ENCODE measurements at regions of chr15 and their contacts with region 1.

Region 1: DNA sequence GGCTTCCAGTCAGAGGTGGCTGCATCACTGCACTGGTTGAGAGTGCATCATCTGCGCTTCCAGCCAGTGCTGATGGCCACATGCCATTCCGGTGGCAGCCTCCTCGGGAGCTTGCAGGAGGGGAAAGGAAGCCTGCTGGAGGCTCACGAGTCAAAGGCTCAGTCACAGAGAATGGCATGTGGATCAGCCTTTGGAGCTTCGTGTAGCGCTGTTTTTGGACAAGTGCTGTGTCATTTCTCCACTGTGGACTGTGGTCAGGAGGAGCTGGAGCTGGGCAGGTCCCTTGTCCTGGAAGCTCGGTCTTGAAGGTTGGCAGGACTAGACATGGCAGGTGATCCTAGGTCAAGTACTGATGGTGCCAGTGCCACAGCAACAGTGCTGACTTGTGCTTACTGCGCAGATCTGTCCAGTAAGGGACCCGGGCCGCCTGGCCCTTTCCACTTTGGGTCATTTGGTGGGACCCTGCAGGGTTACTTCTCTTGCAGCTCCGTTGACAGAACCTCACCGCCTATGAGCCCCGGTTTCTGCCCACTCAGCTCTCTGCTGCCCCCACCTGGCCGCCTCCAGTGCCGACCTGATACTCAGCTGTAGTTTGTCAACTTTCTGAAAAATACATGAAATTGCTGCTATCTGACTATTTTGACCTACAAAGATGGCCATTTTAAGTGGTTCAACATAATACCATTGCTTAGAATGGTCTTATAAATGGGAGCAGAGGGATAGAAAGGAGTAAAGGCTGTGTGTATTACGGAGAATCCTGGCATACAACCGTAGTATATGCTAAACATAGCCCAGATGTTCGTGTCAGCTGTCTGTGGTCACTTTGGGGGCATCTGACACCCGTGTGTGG is 27.6 kb upstream of the TRPM1 start:
- DNase-seq: no peak
- ATAC-seq: peak; percentile 98
- H3K4me3 ChIP-seq: no peak overlapping the region
- H3K27ac ChIP-seq: no peak overlapping the region
- H3K4me1 ChIP-seq: no peaks in the 10 kb centered on the region
- H3K27me3 ChIP-seq: no peaks in the 10 kb centered on the region; a peak in 1 of 4 replicates
- CTCF ChIP-seq: peak; percentile 81 to 98 (median 96)
- EP300 ChIP-seq: no peak
- POLR2A ChIP-seq: no peak
- RAD21 ChIP-seq: peak; percentile 96

Region 2: DNA sequence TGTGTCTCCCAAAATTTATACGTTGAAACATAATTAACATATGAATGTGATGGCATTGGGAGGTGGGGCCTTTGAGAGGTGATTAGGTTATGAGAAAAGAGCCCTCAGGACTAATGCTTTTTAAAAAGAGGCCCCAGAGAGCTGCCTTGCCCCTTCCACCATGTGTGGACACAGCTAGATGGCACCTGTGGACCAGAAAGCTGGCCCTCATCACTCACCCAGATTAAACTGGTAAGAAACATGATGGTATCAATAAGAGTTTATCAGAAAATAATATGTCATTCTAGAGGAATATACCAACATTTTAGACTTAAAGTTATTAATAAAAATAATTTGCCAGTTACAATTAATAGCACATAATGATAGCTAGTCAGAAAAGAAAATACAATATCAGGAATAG is 250.6 kb before region 1 on chr15:
- CTCF ChIA-PET with region 1: interaction called, 12 read pairs
- POLR2A ChIA-PET with region 1: no interaction called
- RAD21 ChIA-PET with region 1: no interaction called
- SMC1A ChIA-PET with region 1: interaction called, 4 read pairs
- in situ Hi-C with region 1: no loop called
- intact Hi-C with region 1: no loop called
- DNase-seq: no peak
- ATAC-seq: no peak
- H3K4me3 ChIP-seq: no peak overlapping the region
- H3K27ac ChIP-seq: no peak overlapping the region
- H3K4me1 ChIP-seq: no peaks in the 10 kb centered on the region
- H3K27me3 ChIP-seq: no peaks in the 10 kb centered on the region
- CTCF ChIP-seq: no peak; a peak in 1 of 6 replicates
- EP300 ChIP-seq: no peak
- POLR2A ChIP-seq: no peak
- RAD21 ChIP-seq: no peak

Region 3: GRCh38 chr15:30903497-30904201 is 225.5 kb before region 1 on chr15 and contains the start of gene FAN1:
- CTCF ChIA-PET with region 1: interaction called, 14 read pairs
- POLR2A ChIA-PET with region 1: no interaction called
- RAD21 ChIA-PET with region 1: interaction called, 6 read pairs
- SMC1A ChIA-PET with region 1: interaction called, 3 read pairs
- in situ Hi-C with region 1: no loop called
- intact Hi-C with region 1: no loop called
- DNase-seq: peak; percentile 77
- ATAC-seq: peak; percentile 94
- H3K4me3 ChIP-seq: peak within 1 kb of the TSS; percentile 73
- H3K27ac ChIP-seq: peak within 1 kb of the TSS; percentile 68
- H3K4me1 ChIP-seq: no peaks in the 10 kb centered on the region
- H3K27me3 ChIP-seq: no peaks in the 10 kb centered on the region
- CTCF ChIP-seq: no peak
- EP300 ChIP-seq: no peak
- POLR2A ChIP-seq: peak; percentile 93
- RAD21 ChIP-seq: no peak
- polyA plus RNA-seq, gene FAN1: 0.55 to 1.0 TPM

Region 4: GRCh38 chr15:30985081-30985531 is 144.0 kb before region 1 on chr15:
- CTCF ChIA-PET with region 1: interaction called, 7 read pairs
- POLR2A ChIA-PET with region 1: no interaction called
- RAD21 ChIA-PET with region 1: interaction called, 8 read pairs
- SMC1A ChIA-PET with region 1: interaction called, 8 read pairs
- in situ Hi-C with region 1: no loop called
- intact Hi-C with region 1: loop called (anchors 10 kb)
- DNase-seq: no peak
- ATAC-seq: peak; percentile 59
- H3K4me3 ChIP-seq: peak overlapping the region; percentile 14; the same call in 1 of the 2 replicates
- H3K27ac ChIP-seq: peak overlapping the region; percentile 20; the same call in 1 of the 2 replicates
- H3K4me1 ChIP-seq: peaks cover 16% of the 10 kb centered on the region
- H3K27me3 ChIP-seq: no peaks in the 10 kb centered on the region
- CTCF ChIP-seq: no peak
- EP300 ChIP-seq: no peak
- POLR2A ChIP-seq: no peak
- RAD21 ChIP-seq: no peak

Region 5: DNA sequence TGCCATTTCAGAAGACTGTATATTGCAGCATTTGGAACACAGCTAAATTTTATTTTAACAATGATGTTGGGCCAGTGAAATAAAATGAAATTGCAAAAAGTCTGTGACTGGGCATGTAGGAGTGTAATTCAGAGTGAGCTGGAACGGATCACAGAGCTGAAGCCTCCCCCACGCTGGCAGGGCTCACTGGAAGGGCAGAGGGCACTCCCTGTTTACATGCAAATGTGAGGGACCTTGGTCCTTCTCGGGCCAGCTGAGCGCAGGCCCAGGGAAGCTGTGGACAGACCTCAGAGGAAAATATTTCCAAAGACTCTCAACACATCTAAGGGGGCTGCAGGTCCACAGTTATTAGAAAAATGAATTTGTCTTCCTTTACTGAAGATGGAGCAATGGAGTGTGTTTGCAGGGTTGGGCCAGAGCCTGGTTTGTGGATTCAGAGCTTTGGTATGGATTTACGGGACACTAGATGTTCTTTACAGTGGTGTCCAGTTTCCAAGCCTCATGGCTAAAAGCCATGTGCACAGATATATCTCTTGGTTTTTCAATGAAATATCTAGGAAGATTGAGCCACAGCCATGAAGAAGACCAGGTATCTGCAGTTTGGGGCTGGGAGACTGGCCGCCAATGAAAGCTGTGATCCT is 59.7 kb before region 1 on chr15:
- CTCF ChIA-PET with region 1: no interaction called
- POLR2A ChIA-PET with region 1: no interaction called
- RAD21 ChIA-PET with region 1: no interaction called
- SMC1A ChIA-PET with region 1: no interaction called
- in situ Hi-C with region 1: no loop called
- intact Hi-C with region 1: no loop called
- DNase-seq: no peak
- ATAC-seq: no peak
- H3K4me3 ChIP-seq: no peak overlapping the region
- H3K27ac ChIP-seq: no peak overlapping the region
- H3K4me1 ChIP-seq: no peaks in the 10 kb centered on the region
- H3K27me3 ChIP-seq: no peaks in the 10 kb centered on the region
- CTCF ChIP-seq: no peak
- EP300 ChIP-seq: no peak
- POLR2A ChIP-seq: no peak
- RAD21 ChIP-seq: no peak

Region 6: DNA sequence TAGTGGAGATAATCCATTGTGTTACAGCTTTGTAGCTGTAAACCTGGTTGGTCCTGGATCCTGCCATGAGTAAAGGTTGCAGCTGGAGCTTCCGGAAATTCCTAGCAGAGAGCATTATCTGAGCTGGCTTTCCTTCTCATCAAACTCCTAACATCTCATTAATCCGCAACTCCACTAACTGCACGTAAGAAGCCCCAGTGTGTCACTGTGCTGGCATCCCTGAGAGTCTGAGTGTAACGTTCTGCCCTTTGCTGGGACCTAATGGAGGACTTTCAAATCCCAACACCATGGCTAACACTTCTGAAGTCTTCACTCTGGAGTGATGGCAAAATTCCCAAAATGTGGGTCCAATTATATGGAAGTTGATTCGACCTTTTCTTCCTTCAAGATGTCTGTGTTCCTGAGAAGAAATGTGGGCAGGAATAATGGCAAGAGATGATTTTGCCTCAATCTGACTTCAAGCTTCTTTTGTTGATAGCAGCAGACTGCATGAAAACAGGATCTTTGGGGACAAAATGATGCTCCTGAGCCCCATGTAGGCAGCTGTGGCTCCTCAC is 18.0 kb before region 1 on chr15:
- CTCF ChIA-PET with region 1: interaction called, 10 read pairs
- POLR2A ChIA-PET with region 1: no interaction called
- RAD21 ChIA-PET with region 1: interaction called, 3 read pairs
- SMC1A ChIA-PET with region 1: interaction called, 4 read pairs
- in situ Hi-C with region 1: no loop called
- intact Hi-C with region 1: no loop called
- DNase-seq: no peak
- ATAC-seq: no peak
- H3K4me3 ChIP-seq: no peak overlapping the region
- H3K27ac ChIP-seq: no peak overlapping the region
- H3K4me1 ChIP-seq: no peaks in the 10 kb centered on the region
- H3K27me3 ChIP-seq: no peaks in the 10 kb centered on the region
- CTCF ChIP-seq: no peak
- EP300 ChIP-seq: no peak
- POLR2A ChIP-seq: no peak
- RAD21 ChIP-seq: no peak

Region 7: GRCh38 chr15:31272558-31273257 is 143.6 kb after region 1 on chr15:
- CTCF ChIA-PET with region 1: no interaction called
- POLR2A ChIA-PET with region 1: no interaction called
- RAD21 ChIA-PET with region 1: no interaction called
- SMC1A ChIA-PET with region 1: no interaction called
- in situ Hi-C with region 1: no loop called
- intact Hi-C with region 1: no loop called
- DNase-seq: no peak
- ATAC-seq: peak; percentile 27
- H3K4me3 ChIP-seq: no peak overlapping the region
- H3K27ac ChIP-seq: no peak overlapping the region
- H3K4me1 ChIP-seq: peaks cover 7% of the 10 kb centered on the region
- H3K27me3 ChIP-seq: no peaks in the 10 kb centered on the region
- CTCF ChIP-seq: no peak
- EP300 ChIP-seq: no peak
- POLR2A ChIP-seq: no peak
- RAD21 ChIP-seq: no peak